ENCODE measurements at regions of chr9 and their contacts with region 1.

Region 1: DNA sequence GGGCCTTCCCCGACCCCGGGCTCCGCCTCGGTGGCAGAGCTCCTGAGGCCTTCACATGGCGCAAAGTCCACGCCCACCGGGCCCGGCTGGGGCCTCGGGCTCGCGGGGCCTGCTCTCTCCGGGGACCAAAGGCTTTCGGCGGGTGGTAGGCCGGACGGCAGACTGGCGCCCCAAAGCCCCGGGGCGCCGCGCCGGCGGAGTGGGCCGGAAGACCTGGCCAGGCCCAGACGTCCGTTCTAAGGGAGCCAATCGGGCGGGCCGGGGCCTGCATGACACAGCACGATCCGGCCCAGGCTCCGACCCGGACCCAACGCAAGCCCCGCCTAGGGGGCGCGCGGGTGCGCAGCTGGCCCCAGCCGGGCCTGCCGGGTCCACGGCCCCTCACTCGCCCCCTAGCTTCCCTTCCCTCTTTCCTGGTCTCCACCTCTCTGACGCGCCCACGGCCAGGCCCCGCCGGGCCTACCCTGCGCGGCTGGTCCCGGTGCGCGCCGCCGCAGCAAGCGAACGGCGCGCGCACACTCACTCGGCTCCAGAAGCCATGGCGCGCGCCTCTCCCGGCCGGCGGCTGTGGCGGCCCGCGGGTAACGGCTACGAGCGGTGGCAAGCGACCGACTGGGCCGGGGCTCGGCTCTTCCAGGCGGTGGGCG is 488 bp downstream of the VCP start:
- DNase-seq: peak; percentile 72 to 80 (median 79)
- H3K4me3 ChIP-seq: peak overlapping the region; percentile 82 to 83
- H3K4me3 Mint-ChIP-seq: peak overlapping the region; percentile 81 to 95 (median 92)
- H3K27ac ChIP-seq: peak overlapping the region; percentile 94
- H3K27ac Mint-ChIP-seq: peak overlapping the region; percentile 81 to 100 (median 97)
- H3K4me1 ChIP-seq: peaks cover 52% of the 10 kb centered on the region
- H3K4me1 Mint-ChIP-seq: peaks cover 41 to 59% (median 51%) of the 10 kb centered on the region in 4 donors
- H3K27me3 ChIP-seq: no peaks in the 10 kb centered on the region
- H3K27me3 Mint-ChIP-seq: no peaks in the 10 kb centered on the region

Region 2: GRCh38 chr9:34154057-34154456 is 917.9 kb before region 1 on chr9:
- CTCF ChIA-PET with region 1: no interaction called
- POLR2A ChIA-PET with region 1: no interaction called
- intact Hi-C with region 1: no loop called
- DNase-seq: no peak
- H3K4me3 ChIP-seq: no peak overlapping the region
- H3K4me3 Mint-ChIP-seq: no peak overlapping the region
- H3K27ac ChIP-seq: no peak overlapping the region
- H3K27ac Mint-ChIP-seq: no peak overlapping the region
- H3K4me1 ChIP-seq: no peaks in the 10 kb centered on the region
- H3K4me1 Mint-ChIP-seq: no peaks in the 10 kb centered on the region
- H3K27me3 ChIP-seq: no peaks in the 10 kb centered on the region
- H3K27me3 Mint-ChIP-seq: peaks cover 0 to 1% of the 10 kb centered on the region in 2 donors

Region 3: DNA sequence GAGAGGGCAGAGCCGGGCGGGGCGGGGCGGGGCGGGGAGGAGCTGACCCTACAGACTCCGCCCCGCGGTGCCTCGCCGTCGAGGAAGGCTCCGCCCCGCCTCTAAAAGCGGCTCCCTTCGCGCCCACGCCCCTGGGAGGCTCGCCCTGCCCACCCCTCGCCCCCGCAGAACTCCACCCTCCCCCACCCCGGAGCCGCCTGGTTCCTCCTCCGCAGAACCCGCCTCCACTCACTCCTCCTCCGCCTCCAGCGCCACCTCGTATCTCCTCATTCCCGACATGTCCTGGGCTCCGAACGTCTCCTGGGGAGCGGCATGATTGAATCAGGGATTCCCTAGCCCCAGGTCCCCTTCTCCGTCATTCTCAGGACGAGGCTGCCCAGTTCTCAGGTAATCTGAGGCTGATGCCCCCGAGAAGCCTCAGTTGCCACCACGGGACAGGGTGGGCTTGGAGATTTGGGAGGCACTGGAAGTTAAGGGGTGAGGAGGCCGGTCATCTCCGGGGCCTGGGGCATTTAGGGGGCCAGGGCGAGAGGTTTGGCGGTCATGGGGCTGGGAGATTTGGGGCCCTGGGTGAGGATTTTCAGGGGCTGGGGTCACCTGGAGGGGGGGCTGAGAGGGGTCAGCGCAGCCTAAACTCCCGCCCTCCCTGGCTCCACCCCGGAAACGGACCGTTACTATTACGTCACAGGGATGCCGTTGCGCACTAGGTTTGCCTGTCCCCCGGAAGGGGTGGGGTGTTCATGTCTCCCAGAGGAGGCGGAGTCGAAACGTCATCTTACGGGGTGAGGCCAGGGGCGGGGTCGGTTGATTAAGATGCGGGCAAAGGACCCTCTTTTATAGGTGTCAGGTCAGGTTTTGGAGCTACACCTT is 406.3 kb before region 1 on chr9:
- CTCF ChIA-PET with region 1: no interaction called
- POLR2A ChIA-PET with region 1: interaction called, 4 read pairs
- intact Hi-C with region 1: loop called (anchors 10 kb)
- DNase-seq: peak; percentile 87 to 94 (median 89)
- H3K4me3 ChIP-seq: peak overlapping the region; percentile 75 to 95
- H3K4me3 Mint-ChIP-seq: peak overlapping the region; percentile 85 to 97 (median 93)
- H3K27ac ChIP-seq: peak overlapping the region; percentile 98
- H3K27ac Mint-ChIP-seq: peak overlapping the region; percentile 95 to 99 (median 99)
- H3K4me1 ChIP-seq: peaks cover 59% of the 10 kb centered on the region
- H3K4me1 Mint-ChIP-seq: peaks cover 41 to 65% (median 53%) of the 10 kb centered on the region in 4 donors
- H3K27me3 ChIP-seq: no peaks in the 10 kb centered on the region
- H3K27me3 Mint-ChIP-seq: no peaks in the 10 kb centered on the region

Region 4: DNA sequence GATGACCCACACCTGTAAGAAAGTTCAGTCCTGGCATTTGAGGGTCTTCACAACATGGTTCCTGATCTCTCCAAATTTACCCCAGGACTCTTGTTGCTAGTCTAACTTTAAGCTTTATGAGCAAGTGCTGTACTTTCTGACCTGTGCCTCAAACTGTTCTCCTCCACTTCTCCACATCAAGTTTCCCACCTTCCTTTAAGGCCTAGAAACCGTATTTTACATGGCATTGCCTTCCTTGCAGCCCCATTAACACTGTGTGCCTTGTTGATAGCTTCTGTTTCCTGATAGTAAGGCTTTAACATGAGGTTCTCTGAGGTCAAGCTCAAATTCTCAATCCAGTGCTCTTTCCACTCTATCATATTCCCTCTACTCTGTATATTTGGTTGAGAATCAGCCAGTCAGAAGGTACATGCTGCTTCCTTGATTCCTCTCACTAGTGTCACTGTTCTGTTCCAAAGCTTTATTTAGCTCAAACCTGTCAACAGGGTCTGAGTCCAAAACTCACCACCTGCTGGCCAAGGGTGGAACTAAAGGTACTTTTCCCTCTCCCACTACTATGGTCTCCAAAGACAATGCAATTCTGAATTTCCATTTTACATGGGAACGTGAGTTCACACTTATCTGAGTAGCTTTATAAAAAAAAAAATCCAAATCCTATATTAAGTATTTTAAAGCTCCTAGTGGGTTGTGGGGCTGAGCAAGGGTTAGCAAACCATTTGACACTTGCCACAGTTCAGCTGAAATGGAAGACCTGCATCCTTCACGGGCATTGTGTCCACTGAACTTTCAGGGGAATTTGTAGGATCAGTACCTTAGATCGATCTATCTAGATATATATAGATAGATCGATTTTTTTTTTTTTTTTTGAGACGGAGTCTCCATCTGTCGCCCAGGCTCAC is 20.6 kb before region 1 on chr9:
- CTCF ChIA-PET with region 1: interaction called, 21 read pairs
- POLR2A ChIA-PET with region 1: interaction called, 6 read pairs
- intact Hi-C with region 1: no loop called
- DNase-seq: peak; percentile 28 to 51 (median 36)
- H3K4me3 ChIP-seq: no peak overlapping the region
- H3K4me3 Mint-ChIP-seq: no peak overlapping the region
- H3K27ac ChIP-seq: no peak overlapping the region
- H3K27ac Mint-ChIP-seq: no peak overlapping the region
- H3K4me1 ChIP-seq: no peaks in the 10 kb centered on the region
- H3K4me1 Mint-ChIP-seq: peaks cover 0 to 13% (median 5%) of the 10 kb centered on the region in 4 donors
- H3K27me3 ChIP-seq: no peaks in the 10 kb centered on the region
- H3K27me3 Mint-ChIP-seq: no peaks in the 10 kb centered on the region

Region 5: GRCh38 chr9:35096035-35096849 is 24.3 kb after region 1 on chr9 and contains the start of gene PIGO:
- CTCF ChIA-PET with region 1: interaction called, 111 read pairs
- POLR2A ChIA-PET with region 1: interaction called, 102 read pairs
- intact Hi-C with region 1: loop called (anchors 1 kb)
- DNase-seq: peak; percentile 89 to 92 (median 92)
- H3K4me3 ChIP-seq: peak within 1 kb of the TSS; percentile 87
- H3K4me3 Mint-ChIP-seq: peak within 1 kb of the TSS; percentile 85 to 91 (median 86)
- H3K27ac ChIP-seq: peak within 1 kb of the TSS; percentile 92
- H3K27ac Mint-ChIP-seq: peak within 1 kb of the TSS; percentile 91 to 99 (median 94)
- H3K4me1 ChIP-seq: peaks cover 15% of the 10 kb centered on the region
- H3K4me1 Mint-ChIP-seq: peaks cover 17 to 60% (median 34%) of the 10 kb centered on the region in 4 donors
- H3K27me3 ChIP-seq: no peaks in the 10 kb centered on the region
- H3K27me3 Mint-ChIP-seq: no peaks in the 10 kb centered on the region
- total RNA-seq, gene PIGO: 23.4 to 29.7 TPM

Region 6: GRCh38 chr9:35102926-35103659 is 31.2 kb after region 1 on chr9 and contains the start of gene STOML2:
- CTCF ChIA-PET with region 1: interaction called, 111 read pairs
- POLR2A ChIA-PET with region 1: interaction called, 56 read pairs
- intact Hi-C with region 1: loop called (anchors 1 kb)
- DNase-seq: peak; percentile 91 to 96 (median 93)
- H3K4me3 ChIP-seq: peak within 1 kb of the TSS; percentile 83 to 96
- H3K4me3 Mint-ChIP-seq: peak within 1 kb of the TSS; percentile 90 to 98 (median 94)
- H3K27ac ChIP-seq: peak within 1 kb of the TSS; percentile 95
- H3K27ac Mint-ChIP-seq: peak within 1 kb of the TSS; percentile 97 to 100 (median 99)
- H3K4me1 ChIP-seq: peaks cover 23% of the 10 kb centered on the region
- H3K4me1 Mint-ChIP-seq: peaks cover 19 to 46% (median 30%) of the 10 kb centered on the region in 4 donors
- H3K27me3 ChIP-seq: no peaks in the 10 kb centered on the region
- H3K27me3 Mint-ChIP-seq: no peaks in the 10 kb centered on the region
- total RNA-seq, gene STOML2: 42.9 to 45.3 TPM

Region 7: GRCh38 chr9:35111001-35111933 is 39.3 kb after region 1 on chr9:
- CTCF ChIA-PET with region 1: interaction called, 5 read pairs
- POLR2A ChIA-PET with region 1: interaction called, 32 read pairs
- intact Hi-C with region 1: loop called (anchors 1 kb)
- DNase-seq: peak; percentile 91 to 98 (median 94)
- H3K4me3 ChIP-seq: peak overlapping the region; percentile 47 to 54
- H3K4me3 Mint-ChIP-seq: peak overlapping the region; percentile 67 to 94 (median 81)
- H3K27ac ChIP-seq: peak overlapping the region; percentile 82
- H3K27ac Mint-ChIP-seq: peak overlapping the region; percentile 88 to 96 (median 91)
- H3K4me1 ChIP-seq: peaks cover 52% of the 10 kb centered on the region
- H3K4me1 Mint-ChIP-seq: peaks cover 41 to 63% (median 47%) of the 10 kb centered on the region in 4 donors
- H3K27me3 ChIP-seq: no peaks in the 10 kb centered on the region
- H3K27me3 Mint-ChIP-seq: no peaks in the 10 kb centered on the region

Region 8: GRCh38 chr9:35341585-35341984 is 269.6 kb after region 1 on chr9:
- CTCF ChIA-PET with region 1: no interaction called
- POLR2A ChIA-PET with region 1: no interaction called
- intact Hi-C with region 1: no loop called
- DNase-seq: no peak
- H3K4me3 ChIP-seq: no peak overlapping the region
- H3K4me3 Mint-ChIP-seq: no peak overlapping the region
- H3K27ac ChIP-seq: no peak overlapping the region
- H3K27ac Mint-ChIP-seq: no peak overlapping the region
- H3K4me1 ChIP-seq: no peaks in the 10 kb centered on the region
- H3K4me1 Mint-ChIP-seq: peaks cover 0 to 5% (median 0%) of the 10 kb centered on the region in 4 donors
- H3K27me3 ChIP-seq: no peaks in the 10 kb centered on the region
- H3K27me3 Mint-ChIP-seq: peaks cover 6 to 9% of the 10 kb centered on the region in 2 donors

Region 9: GRCh38 chr9:35611230-35611797 is 539.4 kb after region 1 on chr9:
- CTCF ChIA-PET with region 1: no interaction called
- POLR2A ChIA-PET with region 1: no interaction called
- intact Hi-C with region 1: no loop called
- DNase-seq: peak; percentile 45 to 63 (median 49)
- H3K4me3 ChIP-seq: no peak overlapping the region
- H3K4me3 Mint-ChIP-seq: peak overlapping the region in 1 of 8 donors; percentile 26
- H3K27ac ChIP-seq: no peak overlapping the region
- H3K27ac Mint-ChIP-seq: peak overlapping the region in 5 of 7 donors; percentile 4 to 83 (median 59)
- H3K4me1 ChIP-seq: peaks cover 19% of the 10 kb centered on the region
- H3K4me1 Mint-ChIP-seq: peaks cover 13 to 43% (median 20%) of the 10 kb centered on the region in 4 donors
- H3K27me3 ChIP-seq: no peaks in the 10 kb centered on the region
- H3K27me3 Mint-ChIP-seq: no peaks in the 10 kb centered on the region

Region 10: GRCh38 chr9:35756275-35757225 is 684.6 kb after region 1 on chr9:
- CTCF ChIA-PET with region 1: no interaction called
- POLR2A ChIA-PET with region 1: no interaction called
- intact Hi-C with region 1: loop called (anchors 2 kb)
- DNase-seq: peak; percentile 68 to 80 (median 71)
- H3K4me3 ChIP-seq: peak overlapping the region; percentile 62 to 90
- H3K4me3 Mint-ChIP-seq: peak overlapping the region; percentile 97 to 100 (median 98)
- H3K27ac ChIP-seq: peak overlapping the region; percentile 70
- H3K27ac Mint-ChIP-seq: peak overlapping the region; percentile 81 to 99 (median 98)
- H3K4me1 ChIP-seq: peaks cover 22% of the 10 kb centered on the region
- H3K4me1 Mint-ChIP-seq: peaks cover 24 to 67% (median 49%) of the 10 kb centered on the region in 4 donors
- H3K27me3 ChIP-seq: no peaks in the 10 kb centered on the region
- H3K27me3 Mint-ChIP-seq: no peaks in the 10 kb centered on the region